IMR-90 (cell line): ENCODE measurements at regions of chr10 and their contacts with region 1.

Region 1: GRCh38 chr10:66931340-66931948 is 5.6 kb downstream of the LRRTM3 start:
- DNase-seq: peak; percentile 77
- ATAC-seq: peak; percentile 92
- H3K4me3 ChIP-seq: no peak overlapping the region
- H3K27ac ChIP-seq: no peak overlapping the region
- H3K4me1 ChIP-seq: no peaks in the 10 kb centered on the region
- H3K27me3 ChIP-seq: peaks cover 13% of the 10 kb centered on the region
- CTCF ChIP-seq: peak; percentile 86
- POLR2A ChIP-seq: no peak
- RAD21 ChIP-seq: peak; percentile 91

Region 2: GRCh38 chr10:66180581-66181318 is 750.7 kb before region 1 on chr10:
- CTCF ChIA-PET with region 1: no interaction called
- POLR2A ChIA-PET with region 1: no interaction called
- dilution Hi-C with region 1: no loop called
- in situ Hi-C with region 1: no loop called
- intact Hi-C with region 1: loop called (anchors 1 kb)
- DNase-seq: peak; percentile 52
- ATAC-seq: peak; percentile 77
- H3K4me3 ChIP-seq: no peak overlapping the region
- H3K27ac ChIP-seq: no peak overlapping the region
- H3K4me1 ChIP-seq: no peaks in the 10 kb centered on the region
- H3K27me3 ChIP-seq: no peaks in the 10 kb centered on the region
- CTCF ChIP-seq: peak; percentile 64
- POLR2A ChIP-seq: no peak
- RAD21 ChIP-seq: peak; percentile 49

Region 3: GRCh38 chr10:66586073-66586472 is 345.4 kb before region 1 on chr10:
- CTCF ChIA-PET with region 1: no interaction called
- POLR2A ChIA-PET with region 1: no interaction called
- dilution Hi-C with region 1: no loop called
- in situ Hi-C with region 1: no loop called
- intact Hi-C with region 1: loop called (anchors 1 kb)
- DNase-seq: peak; percentile 35
- ATAC-seq: peak; percentile 72
- H3K4me3 ChIP-seq: no peak overlapping the region
- H3K27ac ChIP-seq: no peak overlapping the region
- H3K4me1 ChIP-seq: no peaks in the 10 kb centered on the region
- H3K27me3 ChIP-seq: no peaks in the 10 kb centered on the region
- CTCF ChIP-seq: peak; percentile 46
- POLR2A ChIP-seq: no peak
- RAD21 ChIP-seq: peak; percentile 55

Region 4: DNA sequence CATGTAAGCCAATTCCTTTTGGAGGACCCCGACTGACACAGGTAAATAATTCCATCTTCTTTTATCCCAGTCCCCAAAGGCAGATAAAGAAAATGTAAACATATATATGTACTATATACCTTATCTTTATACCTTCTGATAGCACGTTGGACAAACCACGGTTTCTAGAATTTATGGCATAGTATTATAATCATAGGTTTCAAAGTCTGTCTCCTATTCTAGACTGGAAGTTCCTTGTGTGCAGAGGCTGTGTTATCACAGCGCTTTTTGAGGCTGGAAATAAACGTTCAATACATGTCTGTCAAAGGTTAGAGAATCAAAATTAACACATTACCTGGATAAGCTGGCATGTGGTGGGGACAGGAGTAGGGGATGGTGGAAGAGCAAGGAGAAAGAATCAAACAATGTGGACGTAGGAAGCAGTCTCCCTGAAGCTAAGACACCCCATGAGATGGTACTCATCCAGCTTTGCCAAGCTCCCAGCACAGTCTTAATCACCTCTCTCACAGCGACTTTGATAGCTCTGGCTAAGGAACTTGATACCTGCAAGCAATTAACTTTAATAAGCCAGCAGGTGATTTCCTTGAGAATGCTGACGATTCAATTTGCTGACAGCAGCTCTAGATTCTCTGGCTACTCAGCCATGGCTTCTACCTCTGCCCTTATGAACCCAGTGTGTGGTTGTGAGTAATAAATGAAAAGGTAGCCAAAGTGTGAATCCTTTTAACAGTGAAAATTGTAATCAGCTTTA is 214.0 kb before region 1 on chr10:
- CTCF ChIA-PET with region 1: no interaction called
- POLR2A ChIA-PET with region 1: no interaction called
- dilution Hi-C with region 1: no loop called
- in situ Hi-C with region 1: no loop called
- intact Hi-C with region 1: no loop called
- DNase-seq: no peak
- ATAC-seq: no peak
- H3K4me3 ChIP-seq: no peak overlapping the region
- H3K27ac ChIP-seq: no peak overlapping the region
- H3K4me1 ChIP-seq: no peaks in the 10 kb centered on the region
- H3K27me3 ChIP-seq: no peaks in the 10 kb centered on the region
- CTCF ChIP-seq: no peak
- POLR2A ChIP-seq: no peak
- RAD21 ChIP-seq: no peak

Region 5: GRCh38 chr10:66941491-66941890 is 10.0 kb after region 1 on chr10:
- CTCF ChIA-PET with region 1: no interaction called
- POLR2A ChIA-PET with region 1: no interaction called
- dilution Hi-C with region 1: no loop called
- in situ Hi-C with region 1: no loop called
- intact Hi-C with region 1: no loop called
- DNase-seq: no peak
- ATAC-seq: no peak
- H3K4me3 ChIP-seq: no peak overlapping the region
- H3K27ac ChIP-seq: no peak overlapping the region
- H3K4me1 ChIP-seq: no peaks in the 10 kb centered on the region
- H3K27me3 ChIP-seq: no peaks in the 10 kb centered on the region
- CTCF ChIP-seq: no peak
- POLR2A ChIP-seq: no peak
- RAD21 ChIP-seq: no peak